Left colon (tissue), 2 donors: ENCODE measurements at regions of chr3 and their contacts with region 1.

Region 1: GRCh38 chr3:25594007-25594502 is 70.7 kb downstream of the TOP2B start:
- DNase-seq: no peak
- ATAC-seq: peak; percentile 49

Region 2: DNA sequence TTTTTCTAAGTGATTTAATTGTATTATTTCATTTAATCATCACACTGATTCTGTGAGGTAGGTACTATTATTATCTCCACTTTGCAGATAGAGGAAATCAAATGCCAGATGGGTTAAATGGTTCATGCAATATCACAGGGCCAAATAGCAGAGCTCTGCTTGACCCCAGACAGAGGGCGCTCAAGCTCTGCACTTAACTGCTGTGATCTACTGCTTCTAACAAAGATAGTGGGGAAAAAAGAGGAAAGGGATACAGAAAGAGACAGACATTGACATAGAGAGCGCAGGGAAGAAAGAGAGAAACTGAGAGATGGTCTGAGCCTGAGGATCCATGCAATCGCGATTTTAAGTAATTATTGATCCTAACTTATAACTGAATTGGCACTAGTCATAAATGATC is 820.3 kb before region 1 on chr3:
- intact Hi-C with region 1: loop called in 1 of 2 experiments (anchors 5 kb)
- DNase-seq: peak; percentile 40 to 50
- ATAC-seq: peak; percentile 69

Region 3: GRCh38 chr3:24963762-24964625 is 630.1 kb before region 1 on chr3:
- intact Hi-C with region 1: loop called in 1 of 2 experiments (anchors 10 kb)
- DNase-seq: no peak
- ATAC-seq: no peak

Region 4: DNA sequence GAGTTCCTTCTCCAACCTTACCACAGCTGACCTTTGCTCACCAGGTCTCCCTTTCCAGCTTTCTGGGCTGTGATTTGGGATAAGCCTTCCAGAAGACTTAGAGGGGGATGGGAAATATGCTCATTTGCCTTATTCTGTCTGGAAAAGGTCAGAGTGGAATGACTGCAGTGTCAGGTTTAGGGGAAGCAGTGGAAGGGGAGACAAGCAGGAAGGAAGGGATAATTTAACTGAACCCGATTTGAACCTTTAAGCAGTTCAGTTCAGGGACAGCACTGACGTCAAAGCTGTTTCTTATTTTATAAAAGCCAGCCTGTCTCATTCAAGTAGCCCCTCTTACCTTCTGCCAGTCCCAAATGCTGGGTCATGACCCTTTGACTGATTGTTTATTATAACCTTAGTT is 584.4 kb before region 1 on chr3:
- intact Hi-C with region 1: loop called in 1 of 2 experiments (anchors 10 kb)
- DNase-seq: no peak
- ATAC-seq: no peak

Region 5: DNA sequence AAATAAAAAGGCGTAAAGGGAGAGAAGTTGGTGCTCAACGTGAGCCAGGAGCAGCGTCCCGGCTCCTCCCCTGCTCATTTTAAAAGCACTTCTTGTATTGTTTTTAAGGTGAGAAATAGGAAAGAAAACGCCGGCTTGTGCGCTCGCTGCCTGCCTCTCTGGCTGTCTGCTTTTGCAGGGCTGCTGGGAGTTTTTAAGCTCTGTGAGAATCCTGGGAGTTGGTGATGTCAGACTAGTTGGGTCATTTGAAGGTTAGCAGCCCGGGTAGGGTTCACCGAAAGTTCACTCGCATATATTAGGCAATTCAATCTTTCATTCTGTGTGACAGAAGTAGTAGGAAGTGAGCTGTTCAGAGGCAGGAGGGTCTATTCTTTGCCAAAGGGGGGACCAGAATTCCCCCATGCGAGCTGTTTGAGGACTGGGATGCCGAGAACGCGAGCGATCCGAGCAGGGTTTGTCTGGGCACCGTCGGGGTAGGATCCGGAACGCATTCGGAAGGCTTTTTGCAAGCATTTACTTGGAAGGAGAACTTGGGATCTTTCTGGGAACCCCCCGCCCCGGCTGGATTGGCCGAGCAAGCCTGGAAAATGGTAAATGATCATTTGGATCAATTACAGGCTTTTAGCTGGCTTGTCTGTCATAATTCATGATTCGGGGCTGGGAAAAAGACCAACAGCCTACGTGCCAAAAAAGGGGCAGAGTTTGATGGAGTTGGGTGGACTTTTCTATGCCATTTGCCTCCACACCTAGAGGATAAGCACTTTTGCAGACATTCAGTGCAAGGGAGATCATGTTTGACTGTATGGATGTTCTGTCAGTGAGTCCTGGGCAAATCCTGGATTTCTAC is 165.9 kb before region 1 on chr3 and contains the start of gene RARB:
- intact Hi-C with region 1: loop called in 1 of 2 experiments (anchors 5 kb)
- DNase-seq: peak; percentile 52 to 58
- ATAC-seq: peak; percentile 87
- total RNA-seq, gene RARB: 1.2 to 4.3 TPM